ENCODE measurements at regions of chr17 and their contacts with region 1.

Region 1: GRCh38 chr17:42980398-42981397 is at the start of gene RUNDC1:
- DNase-seq: peak; percentile 83
- H3K4me3 ChIP-seq: peak within 1 kb of the TSS; percentile 57 to 89 (median 75)
- H3K27ac ChIP-seq: peak within 1 kb of the TSS; percentile 83
- H3K4me1 ChIP-seq: peaks cover 18% of the 10 kb centered on the region
- H3K27me3 ChIP-seq: no peaks in the 10 kb centered on the region
- CTCF ChIP-seq: peak; percentile 9 to 39
- total RNA-seq, gene RUNDC1: 14.5 to 16.2 TPM

Region 2: GRCh38 chr17:42832974-42833766 is 147.5 kb before region 1 on chr17 and contains the start of gene PSME3:
- CTCF ChIA-PET with region 1: no interaction called
- dilution Hi-C with region 1: no loop called
- in situ Hi-C with region 1: loop called in 1 of 2 experiments (anchors 10 kb)
- intact Hi-C with region 1: no loop called
- DNase-seq: peak; percentile 90
- H3K4me3 ChIP-seq: peak within 1 kb of the TSS; percentile 66 to 81 (median 78)
- H3K27ac ChIP-seq: peak within 1 kb of the TSS; percentile 96
- H3K4me1 ChIP-seq: peaks cover 15% of the 10 kb centered on the region
- H3K27me3 ChIP-seq: no peaks in the 10 kb centered on the region
- CTCF ChIP-seq: no peak
- total RNA-seq, gene PSME3: 93.5 to 186 TPM

Region 3: GRCh38 chr17:42964161-42964932 is 16.4 kb before region 1 on chr17 and contains the start of gene AARSD1:
- CTCF ChIA-PET with region 1: no interaction called
- dilution Hi-C with region 1: no loop called
- in situ Hi-C with region 1: no loop called
- intact Hi-C with region 1: loop called (anchors 1 kb)
- DNase-seq: peak; percentile 90
- H3K4me3 ChIP-seq: peak within 1 kb of the TSS; percentile 58 to 66 (median 61)
- H3K27ac ChIP-seq: peak within 1 kb of the TSS; percentile 39
- H3K4me1 ChIP-seq: peaks cover 14% of the 10 kb centered on the region
- H3K27me3 ChIP-seq: no peaks in the 10 kb centered on the region
- CTCF ChIP-seq: no peak
- total RNA-seq, gene AARSD1: 15.7 to 53.0 TPM